OCI-LY7 (cell line): ENCODE measurements at regions of chr14 and their contacts with region 1.

Region 1: GRCh38 chr14:65164068-65164824 is 61.9 kb upstream of the MAX start:
- DNase-seq: peak; percentile 79
- H3K4me3 ChIP-seq: no peak overlapping the region
- H3K27ac ChIP-seq: peak overlapping the region; percentile 17
- H3K4me1 ChIP-seq: peaks cover 53% of the 10 kb centered on the region
- CTCF ChIP-seq: peak; percentile 99

Region 2: GRCh38 chr14:64410084-64410774 is 754.0 kb before region 1 on chr14:
- CTCF ChIA-PET with region 1: no interaction called
- POLR2A ChIA-PET with region 1: no interaction called
- intact Hi-C with region 1: no loop called
- DNase-seq: no peak
- H3K4me3 ChIP-seq: no peak overlapping the region
- H3K27ac ChIP-seq: no peak overlapping the region
- H3K4me1 ChIP-seq: no peaks in the 10 kb centered on the region
- CTCF ChIP-seq: no peak

Region 3: GRCh38 chr14:66070509-66071319 is 906.5 kb after region 1 on chr14:
- CTCF ChIA-PET with region 1: no interaction called
- POLR2A ChIA-PET with region 1: no interaction called
- intact Hi-C with region 1: loop called (anchors 1 kb)
- DNase-seq: peak; percentile 62
- H3K4me3 ChIP-seq: no peak overlapping the region
- H3K27ac ChIP-seq: no peak overlapping the region
- H3K4me1 ChIP-seq: no peaks in the 10 kb centered on the region
- CTCF ChIP-seq: peak; percentile 95